Mammary epithelial cell (primary cell): ENCODE measurements at regions of chr22 and their contacts with region 1.

Region 1: DNA sequence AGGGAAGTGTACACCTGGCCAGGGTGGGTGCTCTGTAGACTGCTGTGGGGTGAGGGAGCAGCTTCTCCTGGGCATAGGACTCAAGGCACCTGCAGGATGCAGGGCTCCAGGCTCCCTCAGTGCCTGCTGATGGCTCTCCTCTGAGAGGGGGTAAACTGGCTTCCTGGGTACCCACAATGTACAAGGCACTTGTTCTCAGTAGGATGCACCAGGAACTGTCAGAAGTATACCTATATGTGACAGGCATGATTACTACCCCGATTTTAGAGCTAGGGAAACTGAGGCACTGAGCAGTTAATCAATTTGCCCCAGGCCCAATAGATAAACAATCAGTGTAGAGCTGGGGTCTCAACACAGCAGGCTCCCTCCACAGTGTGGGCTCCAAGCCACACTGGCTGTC is 31.4 kb upstream of the GNAZ start:
- DNase-seq: no peak
- H3K4me3 ChIP-seq: no peak overlapping the region
- H3K27ac ChIP-seq: no peak overlapping the region
- H3K4me1 ChIP-seq: no peaks in the 10 kb centered on the region
- H3K27me3 ChIP-seq: no peaks in the 10 kb centered on the region
- CTCF ChIP-seq: no peak

Region 2: DNA sequence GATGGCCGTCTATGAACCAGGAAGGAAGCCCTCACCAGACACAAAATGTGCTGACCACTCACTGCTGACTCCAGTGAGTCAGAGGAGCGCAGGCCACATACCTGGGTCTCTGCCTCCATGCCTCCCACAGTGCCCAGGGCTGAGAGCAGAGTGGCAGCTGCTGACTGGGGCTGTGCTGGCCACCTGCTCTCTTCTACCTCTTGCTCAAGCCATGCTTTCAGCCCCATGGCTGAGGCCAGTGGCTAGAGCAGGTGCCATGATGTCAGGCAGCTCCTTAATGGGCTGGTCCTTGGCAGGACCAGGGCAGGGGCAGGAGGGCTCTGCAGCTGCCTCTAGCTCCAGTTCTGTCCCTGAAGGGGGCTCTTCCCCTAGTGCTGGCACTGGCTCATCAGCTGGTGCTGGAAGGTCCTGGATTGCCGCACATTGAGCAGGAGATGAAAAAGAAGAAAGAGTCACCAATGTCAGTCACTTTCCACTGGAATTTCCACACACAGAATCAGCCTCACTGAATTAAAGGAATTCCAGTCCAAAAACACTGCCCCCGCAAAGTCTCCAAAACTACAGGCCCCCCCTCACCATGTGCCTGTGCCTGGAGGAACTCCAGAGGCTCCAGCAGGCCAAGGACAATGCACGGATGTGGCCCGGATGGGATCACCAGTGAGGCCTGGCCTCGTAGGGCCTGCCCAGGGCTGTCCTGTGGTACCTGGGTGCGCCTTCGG is 308.1 kb before region 1 on chr22:
- CTCF ChIA-PET with region 1: interaction called, 11 read pairs
- dilution Hi-C with region 1: no loop called
- in situ Hi-C with region 1: no loop called
- intact Hi-C with region 1: no loop called
- DNase-seq: no peak
- H3K4me3 ChIP-seq: no peak overlapping the region
- H3K27ac ChIP-seq: no peak overlapping the region
- H3K4me1 ChIP-seq: no peaks in the 10 kb centered on the region
- H3K27me3 ChIP-seq: no peaks in the 10 kb centered on the region
- CTCF ChIP-seq: no peak

Region 3: DNA sequence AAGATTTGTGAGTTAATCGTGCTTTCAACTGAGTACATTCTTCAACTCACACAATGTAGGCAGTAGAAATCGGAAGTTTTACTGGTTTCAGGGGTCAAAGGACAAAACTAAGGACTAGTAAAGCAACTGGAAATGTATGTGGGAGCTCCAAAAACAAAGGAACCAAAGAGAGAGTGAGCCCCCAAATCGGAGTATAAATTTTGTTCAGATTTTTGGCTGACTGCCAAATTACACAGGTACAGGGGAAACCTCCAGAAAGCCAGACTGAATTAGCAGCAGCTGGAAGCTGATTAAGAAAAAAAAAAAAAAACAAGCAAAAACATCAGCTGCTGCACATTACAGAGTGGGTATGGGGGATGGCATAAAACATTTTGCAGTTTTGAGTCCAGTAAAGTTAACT is 43.7 kb before region 1 on chr22:
- CTCF ChIA-PET with region 1: no interaction called
- dilution Hi-C with region 1: no loop called
- in situ Hi-C with region 1: no loop called
- intact Hi-C with region 1: no loop called
- DNase-seq: no peak
- H3K4me3 ChIP-seq: no peak overlapping the region
- H3K27ac ChIP-seq: no peak overlapping the region
- H3K4me1 ChIP-seq: no peaks in the 10 kb centered on the region
- H3K27me3 ChIP-seq: no peaks in the 10 kb centered on the region
- CTCF ChIP-seq: no peak

Region 4: DNA sequence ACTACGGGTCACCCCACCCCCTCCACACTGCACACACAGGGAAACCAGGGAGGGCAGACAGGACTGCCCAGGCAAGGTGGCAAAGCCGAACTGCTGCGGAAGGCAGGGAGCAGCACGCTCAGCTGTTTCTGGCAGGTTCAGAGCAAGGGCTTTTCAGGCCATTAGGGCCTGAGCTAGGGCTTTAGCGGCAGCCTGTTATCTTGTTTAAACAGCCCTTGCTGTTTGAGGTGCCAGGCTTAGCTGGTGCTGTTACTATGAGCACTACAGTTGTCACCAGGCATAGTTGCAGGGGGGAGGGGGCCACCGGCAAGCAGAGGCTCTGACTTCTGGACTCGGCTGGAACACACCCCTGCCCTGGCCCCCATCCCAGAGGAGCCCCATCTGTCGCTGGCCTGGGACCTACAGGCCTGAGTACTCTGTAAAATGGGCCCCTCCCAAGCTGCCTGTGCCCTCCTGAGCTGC is 68.0 kb after region 1 on chr22:
- CTCF ChIA-PET with region 1: no interaction called
- dilution Hi-C with region 1: no loop called
- in situ Hi-C with region 1: no loop called
- intact Hi-C with region 1: no loop called
- DNase-seq: no peak
- H3K4me3 ChIP-seq: no peak overlapping the region
- H3K27ac ChIP-seq: no peak overlapping the region
- H3K4me1 ChIP-seq: no peaks in the 10 kb centered on the region
- H3K27me3 ChIP-seq: no peaks in the 10 kb centered on the region
- CTCF ChIP-seq: no peak

Region 5: DNA sequence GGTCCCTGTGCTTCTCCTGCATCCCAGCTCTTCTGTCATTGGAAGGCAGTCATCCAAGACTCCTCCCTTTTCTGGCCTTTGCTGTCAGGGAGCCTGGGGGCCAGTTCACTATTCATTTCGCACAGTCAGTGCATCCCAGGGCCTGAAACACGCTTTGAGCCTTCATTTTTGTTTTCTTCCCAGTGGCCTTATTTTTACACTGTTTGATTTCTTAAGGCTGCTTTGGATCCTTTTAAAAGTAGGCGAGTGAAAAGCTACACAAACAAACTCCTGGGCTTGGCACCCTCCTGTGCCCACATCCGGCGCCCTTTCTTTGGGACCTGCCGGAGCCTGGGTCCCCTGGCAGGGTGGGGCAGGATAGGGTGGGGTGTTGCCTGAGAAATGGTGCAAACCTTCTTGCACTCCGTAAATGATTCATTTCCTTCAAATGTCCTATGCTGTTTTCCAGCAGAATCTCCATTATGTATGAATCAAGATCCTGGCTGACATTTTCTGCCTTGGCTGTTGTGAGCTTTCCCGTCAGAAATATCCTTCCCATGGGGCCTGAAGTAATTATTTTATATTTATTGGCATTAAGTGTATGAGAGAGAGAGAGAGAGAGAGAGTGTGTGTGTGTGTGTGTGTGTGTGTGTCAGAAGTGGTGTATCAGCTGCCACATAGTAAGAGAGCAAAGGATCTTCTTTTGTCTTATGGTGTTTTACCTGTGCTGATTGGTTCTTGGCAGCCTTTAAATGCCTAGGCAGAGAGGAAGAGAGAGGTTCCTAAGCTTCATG is 187.0 kb after region 1 on chr22:
- CTCF ChIA-PET with region 1: no interaction called
- dilution Hi-C with region 1: no loop called
- in situ Hi-C with region 1: no loop called
- intact Hi-C with region 1: no loop called
- DNase-seq: peak; percentile 84
- H3K4me3 ChIP-seq: peak overlapping the region in 2 of 3 experiments; percentile 27 to 34
- H3K27ac ChIP-seq: peak overlapping the region; percentile 91
- H3K4me1 ChIP-seq: peaks cover 47% of the 10 kb centered on the region
- H3K27me3 ChIP-seq: no peaks in the 10 kb centered on the region
- CTCF ChIP-seq: no peak